Testis (tissue), 5 donors: ENCODE measurements at regions of chr5 and their contacts with region 1.

Region 1: DNA sequence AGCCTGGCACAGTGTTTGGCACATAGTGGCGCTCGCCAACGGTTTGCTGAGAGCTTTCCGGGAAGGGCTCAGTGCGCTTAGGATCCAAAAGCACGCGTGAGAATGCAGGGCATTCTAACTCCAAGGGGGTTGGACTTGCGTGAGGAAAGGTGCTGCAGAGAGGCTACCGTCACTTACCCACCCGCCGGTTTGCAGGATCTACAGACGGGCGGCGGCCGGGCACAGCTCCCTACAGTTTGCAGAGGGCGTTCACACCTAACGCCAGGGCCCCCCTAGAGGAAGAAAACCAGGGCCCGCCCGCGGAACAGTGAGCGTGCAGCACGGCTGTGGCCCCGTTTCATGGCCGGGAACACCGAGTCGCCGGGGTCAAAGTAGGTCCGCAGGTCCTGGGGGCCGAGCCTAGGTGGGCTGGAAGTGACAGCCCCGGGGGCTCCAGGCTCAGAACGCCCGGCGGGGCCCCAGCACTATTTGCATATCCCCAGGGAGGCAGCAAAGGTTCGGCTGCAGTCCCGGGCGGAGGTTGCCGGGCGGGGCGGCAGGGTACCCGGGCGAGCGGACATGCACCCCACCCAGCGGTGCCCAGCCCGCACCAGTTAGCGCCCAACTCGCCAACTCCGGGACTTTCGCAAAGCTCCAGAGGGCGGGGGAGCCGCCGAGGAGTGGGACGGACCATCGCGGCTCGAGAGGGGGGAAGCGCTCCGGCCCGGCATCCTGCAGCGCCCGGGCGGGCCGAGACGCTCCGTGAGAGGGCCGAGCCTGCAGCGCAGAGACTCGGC is 526 bp upstream of the GALNT10 start:
- DNase-seq: peak; percentile 77
- H3K4me3 ChIP-seq: peak overlapping the region; percentile 67 to 94
- H3K27ac ChIP-seq: peak overlapping the region; percentile 59 to 73
- H3K4me1 ChIP-seq: peaks cover 23% of the 10 kb centered on the region
- H3K27me3 ChIP-seq: no peaks in the 10 kb centered on the region
- CTCF ChIP-seq: peak in 2 of 3 experiments; percentile 15 to 49
- POLR2A ChIP-seq: no peak

Region 2: DNA sequence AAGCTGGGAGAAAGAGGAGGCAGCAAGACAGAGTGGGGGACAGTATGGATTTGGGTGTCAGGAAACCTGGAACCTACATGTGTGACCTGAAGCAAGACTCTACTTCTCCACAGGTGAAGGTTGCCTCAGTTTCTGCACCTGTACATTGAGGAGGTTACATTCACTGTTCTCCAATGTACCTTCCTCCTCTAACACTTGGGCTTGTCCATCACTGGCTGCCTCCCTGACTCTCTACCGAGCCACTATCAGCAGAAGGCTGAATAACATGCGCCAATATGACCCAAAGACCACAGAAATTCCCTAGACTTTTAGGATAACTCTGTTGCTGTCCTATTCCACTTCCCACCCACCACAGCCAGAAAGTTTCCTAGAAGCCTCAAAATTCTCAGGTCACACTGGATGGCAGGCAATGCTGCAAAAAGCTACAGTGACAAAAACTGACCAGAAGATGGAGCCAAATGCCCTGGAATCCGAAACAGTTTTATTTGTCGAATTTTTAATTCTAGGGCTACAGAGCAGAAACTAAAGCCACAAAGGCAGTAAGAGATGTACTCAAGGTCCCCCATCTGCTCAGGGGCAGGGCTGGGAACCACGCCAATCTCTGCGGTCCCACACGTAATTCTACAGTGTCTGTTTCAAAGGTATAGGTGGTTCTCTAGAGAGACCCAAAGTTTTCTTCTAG is 215.7 kb before region 1 on chr5:
- intact Hi-C with region 1: loop called (anchors 10 kb)
- DNase-seq: peak; percentile 25
- H3K4me3 ChIP-seq: no peak overlapping the region
- H3K27ac ChIP-seq: no peak overlapping the region
- H3K4me1 ChIP-seq: no peaks in the 10 kb centered on the region
- H3K27me3 ChIP-seq: no peaks in the 10 kb centered on the region
- CTCF ChIP-seq: peak; percentile 53 to 80 (median 59)
- POLR2A ChIP-seq: no peak